ENCODE measurements at regions of chr6 and their contacts with region 1.

Region 1: GRCh38 chr6:20401205-20402091 is at the start of gene E2F3:
- DNase-seq: peak; percentile 100
- ATAC-seq: peak; percentile 90 to 94
- H3K4me3 ChIP-seq: peak within 1 kb of the TSS; percentile 79 to 92 (median 86)
- H3K27ac ChIP-seq: peak within 1 kb of the TSS; percentile 87 to 98 (median 95)
- H3K4me1 ChIP-seq: peaks cover 0 to 9% of the 10 kb centered on the region in 2 donors
- H3K27me3 ChIP-seq: no peaks in the 10 kb centered on the region
- CTCF ChIP-seq: no peak
- POLR2A ChIP-seq: peak; percentile 25 to 42
- total RNA-seq, gene E2F3: 5.4 to 13.6 (median 10.7) TPM

Region 2: GRCh38 chr6:20291764-20292580 is 109.5 kb before region 1 on chr6:
- in situ Hi-C with region 1: loop called in 1 of 4 experiments (anchors 5 kb)
- intact Hi-C with region 1: loop called (anchors 5 kb)
- DNase-seq: peak; percentile 43 to 59
- ATAC-seq: peak; percentile 81 to 95
- H3K4me3 ChIP-seq: no peak overlapping the region
- H3K27ac ChIP-seq: no peak overlapping the region
- H3K4me1 ChIP-seq: peaks cover 0 to 3% of the 10 kb centered on the region in 2 donors
- H3K27me3 ChIP-seq: no peaks in the 10 kb centered on the region
- CTCF ChIP-seq: peak; percentile 73 to 89 (median 79)
- POLR2A ChIP-seq: no peak

Region 3: DNA sequence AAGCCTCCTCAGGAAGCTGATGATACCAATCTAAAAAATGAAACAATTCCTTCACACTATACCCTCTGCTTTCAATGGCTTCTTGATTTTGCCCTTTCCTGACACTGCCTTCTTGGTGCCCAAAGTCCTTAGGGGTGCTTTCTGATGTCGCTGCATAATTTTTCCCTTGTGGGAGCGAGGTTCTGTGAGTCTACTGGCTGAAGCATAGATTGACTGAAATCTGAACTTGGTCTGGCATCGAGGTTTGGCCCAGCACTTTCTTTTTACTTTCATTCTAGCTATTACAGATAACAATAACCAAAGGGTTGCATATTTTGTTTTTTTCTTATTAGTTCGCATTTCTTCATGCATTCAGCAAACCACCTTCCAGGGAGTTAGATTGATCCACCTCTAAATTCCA is 66.0 kb after region 1 on chr6:
- in situ Hi-C with region 1: no loop called
- intact Hi-C with region 1: no loop called
- DNase-seq: no peak
- ATAC-seq: no peak
- H3K4me3 ChIP-seq: no peak overlapping the region
- H3K27ac ChIP-seq: no peak overlapping the region
- H3K4me1 ChIP-seq: no peaks in the 10 kb centered on the region
- H3K27me3 ChIP-seq: no peaks in the 10 kb centered on the region
- CTCF ChIP-seq: no peak
- POLR2A ChIP-seq: no peak

Measured in gastrocnemius medialis (tissue), 4 donors.